Activated naive CD4-positive, alpha-beta T cell treated with anti-CD3 and anti-CD28 coated beads for 36 hours (primary cell): ENCODE measurements at regions of chr6 and their contacts with region 1.

Region 1: GRCh38 chr6:125779924-125780539 is 10.7 kb upstream of the NCOA7 start:
- DNase-seq: peak; percentile 90
- H3K4me3 Mint-ChIP-seq: no peak overlapping the region
- H3K27ac Mint-ChIP-seq: no peak overlapping the region
- H3K4me1 Mint-ChIP-seq: peaks cover 15% of the 10 kb centered on the region
- H3K27me3 Mint-ChIP-seq: peaks cover 1% of the 10 kb centered on the region

Region 2: GRCh38 chr6:125749173-125749864 is 30.7 kb before region 1 on chr6 and contains the start of gene HEY2:
- CTCF ChIA-PET with region 1: interaction called, 7 read pairs
- intact Hi-C with region 1: loop called (anchors 1 kb)
- DNase-seq: peak; percentile 83
- H3K4me3 Mint-ChIP-seq: peak within 1 kb of the TSS; percentile 79
- H3K27ac Mint-ChIP-seq: no peak within 1 kb of the TSS
- H3K4me1 Mint-ChIP-seq: peaks cover 33% of the 10 kb centered on the region
- H3K27me3 Mint-ChIP-seq: peaks cover 51% of the 10 kb centered on the region
- total RNA-seq, gene HEY2: not detected

Region 3: DNA sequence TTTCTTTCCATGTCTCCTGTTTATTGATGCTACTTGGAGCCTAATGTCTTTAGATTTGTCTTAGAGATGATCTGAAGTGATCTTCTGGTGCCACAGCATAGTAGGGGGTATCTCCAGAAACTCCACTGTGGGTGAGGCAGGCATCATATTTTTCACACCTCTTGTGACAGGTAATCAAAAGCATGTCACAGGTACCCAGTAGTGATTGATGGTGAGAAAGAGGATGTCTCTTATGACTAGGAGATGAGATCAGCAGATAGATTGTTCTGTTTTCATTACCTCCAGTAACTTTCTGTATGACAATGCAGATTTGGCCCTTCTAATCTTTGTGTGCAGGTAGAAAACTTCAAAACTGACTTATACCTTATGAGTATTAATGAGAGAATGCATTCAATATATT is 24.2 kb after region 1 on chr6:
- CTCF ChIA-PET with region 1: interaction called, 3 read pairs
- intact Hi-C with region 1: loop called (anchors 1 kb)
- DNase-seq: peak; percentile 67
- H3K4me3 Mint-ChIP-seq: no peak overlapping the region
- H3K27ac Mint-ChIP-seq: no peak overlapping the region
- H3K4me1 Mint-ChIP-seq: peaks cover 63% of the 10 kb centered on the region
- H3K27me3 Mint-ChIP-seq: no peaks in the 10 kb centered on the region

Region 4: DNA sequence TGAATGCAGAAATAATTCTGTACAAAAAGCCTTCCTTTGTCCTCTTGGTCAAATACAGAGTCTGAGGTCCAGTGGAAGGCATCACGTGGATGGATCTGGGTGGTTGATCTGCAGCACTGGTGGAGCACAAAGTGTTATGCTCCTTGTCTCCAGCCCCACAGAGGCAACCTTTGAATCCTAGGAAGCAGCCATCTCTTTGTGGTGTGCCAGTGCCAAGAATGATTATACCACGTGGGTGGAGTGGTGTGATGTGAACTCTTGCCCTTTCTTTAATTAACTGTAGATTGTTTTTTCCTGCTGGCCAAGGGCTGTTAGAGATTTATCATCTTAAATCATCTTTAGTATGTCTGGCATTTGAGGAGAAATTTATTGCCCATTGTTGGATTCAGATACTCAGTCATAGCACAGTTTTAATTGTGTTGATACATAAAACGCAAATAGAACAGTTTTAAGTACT is 41.8 kb after region 1 on chr6:
- CTCF ChIA-PET with region 1: no interaction called
- intact Hi-C with region 1: no loop called
- DNase-seq: no peak
- H3K4me3 Mint-ChIP-seq: no peak overlapping the region
- H3K27ac Mint-ChIP-seq: no peak overlapping the region
- H3K4me1 Mint-ChIP-seq: peaks cover 25% of the 10 kb centered on the region
- H3K27me3 Mint-ChIP-seq: no peaks in the 10 kb centered on the region

Region 5: GRCh38 chr6:125906158-125906998 is 126.3 kb after region 1 on chr6:
- CTCF ChIA-PET with region 1: interaction called, 10 read pairs
- intact Hi-C with region 1: loop called (anchors 2 kb)
- DNase-seq: peak; percentile 72
- H3K4me3 Mint-ChIP-seq: no peak overlapping the region
- H3K27ac Mint-ChIP-seq: peak overlapping the region; percentile 20
- H3K4me1 Mint-ChIP-seq: peaks cover 25% of the 10 kb centered on the region
- H3K27me3 Mint-ChIP-seq: no peaks in the 10 kb centered on the region

Region 6: DNA sequence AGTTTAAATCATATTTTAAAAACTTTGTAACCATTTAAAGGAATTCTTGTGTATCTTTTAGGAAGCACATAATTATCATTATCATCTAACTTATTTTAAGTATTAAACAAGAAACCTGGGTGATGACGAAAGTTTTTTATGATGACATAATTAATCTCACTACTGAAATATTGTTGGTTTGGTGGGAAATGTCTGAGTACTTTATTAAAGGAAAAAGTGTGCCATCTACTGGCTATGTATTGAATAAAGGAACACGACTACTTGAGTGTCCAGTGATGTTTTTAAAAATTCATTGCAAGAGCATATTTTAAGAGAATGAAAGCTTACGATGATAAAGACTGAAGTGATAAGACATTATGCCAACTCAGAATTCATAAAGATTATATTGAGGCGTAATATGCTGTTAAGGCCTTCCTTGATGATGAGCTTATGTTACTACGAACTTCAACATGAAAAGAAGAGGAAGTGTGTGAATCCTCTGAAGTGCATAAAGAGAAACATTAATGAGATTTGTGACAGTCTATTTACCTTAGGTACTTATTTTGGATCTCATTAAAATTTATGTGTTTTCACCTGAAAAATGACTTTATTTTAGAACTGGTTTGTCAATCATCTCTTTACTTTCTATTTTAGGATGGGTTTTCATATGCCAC is 194.3 kb after region 1 on chr6:
- CTCF ChIA-PET with region 1: interaction called, 9 read pairs
- intact Hi-C with region 1: loop called (anchors 1 kb)
- DNase-seq: no peak
- H3K4me3 Mint-ChIP-seq: no peak overlapping the region
- H3K27ac Mint-ChIP-seq: no peak overlapping the region
- H3K4me1 Mint-ChIP-seq: peaks cover 7% of the 10 kb centered on the region
- H3K27me3 Mint-ChIP-seq: no peaks in the 10 kb centered on the region

Region 7: DNA sequence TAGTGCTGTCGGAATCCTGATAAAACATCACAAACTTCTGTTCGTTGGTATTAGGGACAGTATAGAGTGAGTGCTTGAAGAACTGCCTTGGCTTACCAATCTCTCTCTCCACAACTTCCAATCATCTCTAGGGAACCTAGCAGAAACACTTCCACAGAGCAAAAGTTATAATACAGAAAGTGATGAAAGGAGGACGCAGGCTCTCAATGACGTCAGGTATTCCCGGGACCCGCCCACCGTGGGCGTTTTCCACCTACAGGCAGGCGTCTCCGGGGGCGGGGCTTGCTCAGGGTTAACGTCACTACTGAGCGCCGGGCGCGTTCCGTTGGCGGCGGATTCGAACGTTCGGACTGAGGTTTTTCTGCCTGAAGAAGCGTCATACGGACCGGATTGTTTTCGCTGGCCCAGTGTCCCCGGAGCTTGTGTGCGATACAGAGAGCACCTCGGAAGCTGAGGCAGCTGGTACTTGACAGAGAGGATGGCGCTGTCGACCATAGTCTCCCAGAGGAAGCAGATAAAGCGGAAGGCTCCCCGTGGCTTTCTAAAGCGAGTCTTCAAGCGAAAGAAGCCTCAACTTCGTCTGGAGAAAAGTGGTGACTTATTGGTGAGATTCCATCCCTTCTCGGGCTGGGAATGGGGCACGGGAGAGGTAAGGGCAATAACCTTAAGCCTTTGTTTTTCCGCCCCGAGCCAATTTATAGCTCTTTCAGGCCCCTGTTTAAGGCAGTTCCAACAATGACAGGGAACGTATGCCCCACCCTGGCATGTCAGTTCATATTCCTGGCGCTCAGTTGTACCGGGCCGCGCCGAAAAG is 560.0 kb after region 1 on chr6 and contains the start of gene CENPW:
- CTCF ChIA-PET with region 1: no interaction called
- intact Hi-C with region 1: loop called (anchors 1 kb)
- DNase-seq: peak; percentile 98
- H3K4me3 Mint-ChIP-seq: no peak within 1 kb of the TSS
- H3K27ac Mint-ChIP-seq: no peak within 1 kb of the TSS
- H3K4me1 Mint-ChIP-seq: peaks cover 14% of the 10 kb centered on the region
- H3K27me3 Mint-ChIP-seq: no peaks in the 10 kb centered on the region
- total RNA-seq, gene CENPW: 77.8 to 85.8 TPM

Region 8: GRCh38 chr6:127247114-127248096 is 1467.4 kb after region 1 on chr6:
- CTCF ChIA-PET with region 1: no interaction called
- intact Hi-C with region 1: no loop called
- DNase-seq: no peak
- H3K4me3 Mint-ChIP-seq: no peak overlapping the region
- H3K27ac Mint-ChIP-seq: no peak overlapping the region
- H3K4me1 Mint-ChIP-seq: no peaks in the 10 kb centered on the region
- H3K27me3 Mint-ChIP-seq: peaks cover 3% of the 10 kb centered on the region